ENCODE measurements at regions of chr19 and their contacts with region 1.

Region 1: DNA sequence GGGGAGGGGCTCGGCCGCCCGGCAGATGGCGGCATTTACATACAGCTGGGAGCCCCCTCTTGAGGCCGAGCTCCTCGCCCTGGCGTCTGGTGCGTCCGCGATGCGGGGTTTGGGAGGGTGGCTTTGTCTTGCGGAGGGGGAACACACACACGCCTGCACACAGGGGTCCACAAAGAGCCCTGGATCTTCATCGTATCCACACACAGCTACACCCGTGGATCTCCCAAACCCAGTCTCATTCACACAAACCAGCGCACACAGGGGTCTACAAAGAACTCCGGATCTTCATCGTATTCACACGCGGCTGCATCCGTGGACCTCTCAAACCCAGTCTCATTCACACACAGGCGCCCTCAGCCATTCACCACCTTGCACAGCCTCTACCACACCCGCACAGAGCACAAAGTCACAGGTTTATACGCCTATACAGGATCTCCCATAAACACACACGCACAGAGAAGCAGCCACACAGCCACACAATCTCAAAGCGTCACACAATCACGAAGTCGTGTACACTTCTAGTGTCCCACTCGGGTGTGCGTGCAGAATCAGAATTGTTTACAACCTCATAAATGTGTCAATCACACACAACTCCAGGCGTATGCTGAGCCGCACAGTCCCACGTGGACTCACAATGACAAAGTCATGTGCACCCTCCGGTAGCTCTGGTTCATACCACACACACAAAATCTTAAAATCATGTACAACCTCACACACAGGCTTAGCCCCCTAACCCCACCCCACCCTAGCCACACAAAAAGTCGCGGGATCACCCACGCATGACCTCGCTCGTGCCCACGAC is 550 bp upstream of the DLL3 start:
- DNase-seq: peak; percentile 88
- H3K4me3 ChIP-seq: peak overlapping the region in 1 of 2 experiments; percentile 20; a peak in 2 of 4 replicates
- H3K27ac ChIP-seq: peak overlapping the region in 1 of 2 experiments; percentile 40; a peak in 1 of 4 replicates
- H3K4me1 ChIP-seq: peaks cover 0 to 9% of the 10 kb centered on the region in 2 experiments; a peak in 1 of 4 replicates
- H3K27me3 ChIP-seq: no peaks in the 10 kb centered on the region; the same call in 1 of the 2 replicates
- CTCF ChIP-seq: peak; percentile 47
- EP300 ChIP-seq: no peak
- RAD21 ChIP-seq: peak; percentile 65

Region 2: GRCh38 chr19:39480337-39481228 is 17.6 kb before region 1 on chr19 and contains the start of gene TIMM50:
- CTCF ChIA-PET with region 1: interaction called, 16 read pairs
- POLR2A ChIA-PET with region 1: no interaction called
- DNase-seq: peak; percentile 96
- H3K4me3 ChIP-seq: peak within 1 kb of the TSS; percentile 94 to 95
- H3K27ac ChIP-seq: peak within 1 kb of the TSS; percentile 65 to 71
- H3K4me1 ChIP-seq: peaks cover 0 to 14% of the 10 kb centered on the region in 2 experiments; a peak in 1 of 4 replicates
- H3K27me3 ChIP-seq: no peaks in the 10 kb centered on the region
- CTCF ChIP-seq: no peak
- EP300 ChIP-seq: no peak
- RAD21 ChIP-seq: no peak
- polyA plus RNA-seq, gene TIMM50: 83.8 and 98.1 TPM in 2 replicates

Region 3: DNA sequence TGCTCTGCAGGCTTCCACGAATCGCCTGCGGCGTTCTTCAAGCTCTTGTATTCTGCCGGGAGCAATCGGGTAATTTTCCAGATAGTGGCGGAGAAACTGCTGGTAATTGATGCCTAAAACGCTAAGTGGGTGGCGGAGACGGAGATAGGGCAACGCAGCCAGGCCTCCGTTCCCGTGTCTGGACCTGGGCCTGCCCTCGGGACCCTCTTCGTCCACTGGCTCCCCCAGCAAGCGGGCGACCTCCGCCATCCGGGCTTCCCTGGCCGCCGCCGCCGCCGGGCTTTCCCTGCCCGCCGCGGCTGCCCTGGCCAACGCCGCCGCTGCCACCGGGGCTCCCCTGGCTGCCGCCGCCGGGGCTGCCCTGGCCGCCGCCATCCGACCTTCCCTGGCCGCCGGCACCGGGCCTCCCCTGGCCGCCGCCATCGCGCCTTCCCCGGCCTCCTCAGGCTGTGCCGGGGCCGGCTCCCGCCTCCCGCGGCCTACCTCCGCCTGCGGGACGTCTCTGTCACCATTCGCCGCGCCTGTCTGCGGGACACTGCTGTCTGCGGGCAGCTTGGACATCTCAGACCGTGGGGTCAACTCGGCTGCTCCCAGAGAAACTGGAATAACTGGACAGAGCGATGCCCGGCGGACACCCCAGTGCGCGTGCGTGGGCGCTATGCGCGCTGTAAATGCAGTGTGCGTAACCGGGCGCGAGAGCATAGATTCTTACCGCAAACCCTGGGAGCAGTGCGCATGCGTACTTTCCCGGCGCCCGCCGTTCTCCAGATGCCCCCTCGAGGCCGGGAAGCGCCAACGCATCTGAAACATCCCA is 41.5 kb after region 1 on chr19 and contains the start of gene EID2:
- CTCF ChIA-PET with region 1: interaction called, 44 read pairs
- POLR2A ChIA-PET with region 1: no interaction called
- DNase-seq: peak; percentile 97
- H3K4me3 ChIP-seq: peak within 1 kb of the TSS; percentile 77 to 88
- H3K27ac ChIP-seq: peak within 1 kb of the TSS; percentile 84 to 89
- H3K4me1 ChIP-seq: peaks cover 3 to 7% of the 10 kb centered on the region in 2 experiments; a peak in 2 of 4 replicates
- H3K27me3 ChIP-seq: no peaks in the 10 kb centered on the region; the same call in 1 of the 2 replicates
- CTCF ChIP-seq: peak; percentile 70
- EP300 ChIP-seq: no peak
- RAD21 ChIP-seq: peak; percentile 62
- polyA plus RNA-seq, gene EID2: 13.9 and 14.1 TPM in 2 replicates

Region 4: DNA sequence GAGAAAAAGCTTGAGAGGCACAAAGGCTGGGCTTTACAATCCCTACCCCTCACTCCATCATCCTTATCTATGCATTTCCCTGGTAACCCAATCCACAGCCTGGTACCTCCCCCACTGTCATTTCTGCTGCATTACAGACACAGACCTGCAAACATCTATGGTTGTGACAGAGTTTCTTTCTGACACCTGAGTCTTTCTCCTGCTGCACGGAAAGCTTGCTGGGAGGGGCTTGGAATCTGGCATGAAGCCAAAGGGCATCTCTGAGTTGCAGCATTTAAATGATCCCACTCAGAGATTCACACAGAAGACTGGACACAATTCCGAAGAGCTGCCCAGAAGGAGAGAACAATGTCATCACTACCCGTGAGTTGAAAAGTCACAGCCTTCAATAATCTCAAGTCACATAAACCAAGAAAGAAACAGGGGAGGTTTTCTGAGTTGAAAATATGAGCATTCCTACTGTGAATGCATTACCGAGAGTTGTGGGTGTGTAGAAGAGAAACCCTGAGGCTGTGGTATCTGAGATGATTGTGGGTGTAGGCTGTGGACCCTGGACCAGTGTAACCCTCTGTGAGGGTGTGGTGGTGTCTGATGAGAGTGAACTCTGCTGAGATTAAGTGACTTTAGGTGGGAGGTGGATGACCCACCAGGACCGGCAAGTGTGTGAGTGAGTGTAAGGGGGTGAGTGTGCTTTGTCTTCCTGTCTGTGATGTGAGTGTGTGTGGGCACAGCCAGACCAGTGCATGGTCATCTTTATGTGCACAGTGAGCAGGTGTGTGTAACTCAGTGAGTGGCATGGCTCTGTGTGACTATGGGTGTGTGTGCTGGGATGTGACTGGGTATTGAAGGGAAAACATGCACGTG is 206.2 kb after region 1 on chr19 and contains the start of gene LGALS14:
- CTCF ChIA-PET with region 1: no interaction called
- POLR2A ChIA-PET with region 1: no interaction called
- DNase-seq: no peak
- H3K4me3 ChIP-seq: no peak within 1 kb of the TSS
- H3K27ac ChIP-seq: no peak within 1 kb of the TSS
- H3K4me1 ChIP-seq: no peaks in the 10 kb centered on the region
- H3K27me3 ChIP-seq: peaks cover 10% of the 10 kb centered on the region; the same call in 1 of the 2 replicates
- CTCF ChIP-seq: no peak
- EP300 ChIP-seq: no peak
- RAD21 ChIP-seq: no peak
- polyA plus RNA-seq, gene LGALS14: not detected in 2 replicates